ENCODE measurements at regions of chr3 and their contacts with region 1.

Region 1: DNA sequence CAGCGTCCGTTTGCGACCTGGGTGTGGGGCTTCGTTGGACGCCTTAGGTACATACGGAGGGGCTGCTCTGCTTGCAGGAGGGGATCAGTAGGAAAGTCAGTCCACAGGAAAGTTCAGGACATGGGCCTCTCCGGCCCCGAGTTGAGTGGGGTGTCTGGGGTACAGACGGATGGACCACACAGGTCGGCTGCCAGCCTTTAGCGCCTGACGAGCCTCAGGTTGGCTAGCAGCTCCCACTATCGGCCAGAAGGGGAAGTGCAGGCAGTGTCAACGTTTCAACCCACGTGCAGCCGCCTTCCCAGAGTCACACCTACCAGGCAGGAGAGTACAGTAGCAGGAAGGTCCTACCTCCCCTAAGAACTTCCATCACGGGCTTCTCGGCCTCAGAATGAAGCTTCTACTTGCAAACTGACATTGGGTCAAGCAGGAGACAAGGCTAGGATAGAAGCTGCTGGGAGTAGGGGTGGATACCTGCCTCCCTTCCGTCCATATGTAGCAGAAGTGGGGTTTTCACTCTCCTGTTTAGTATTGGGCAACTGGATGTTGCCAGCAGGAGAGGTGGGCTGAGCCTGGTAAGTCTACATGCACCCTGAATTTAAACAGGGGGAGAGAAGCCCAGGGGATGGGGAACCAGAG is 1.8 kb upstream of the SCN5A start:
- DNase-seq: peak; percentile 45
- ATAC-seq: peak; percentile 71
- H3K4me3 ChIP-seq: no peak overlapping the region
- H3K27ac ChIP-seq: no peak overlapping the region
- H3K4me1 ChIP-seq: peaks cover 13% of the 10 kb centered on the region
- H3K27me3 ChIP-seq: peaks cover 2 to 39% of the 10 kb centered on the region in 2 experiments
- CTCF ChIP-seq: peak; percentile 91
- EP300 ChIP-seq: no peak
- POLR2A ChIP-seq: no peak
- RAD21 ChIP-seq: peak; percentile 54; the same call in 1 of the 2 replicates

Region 2: DNA sequence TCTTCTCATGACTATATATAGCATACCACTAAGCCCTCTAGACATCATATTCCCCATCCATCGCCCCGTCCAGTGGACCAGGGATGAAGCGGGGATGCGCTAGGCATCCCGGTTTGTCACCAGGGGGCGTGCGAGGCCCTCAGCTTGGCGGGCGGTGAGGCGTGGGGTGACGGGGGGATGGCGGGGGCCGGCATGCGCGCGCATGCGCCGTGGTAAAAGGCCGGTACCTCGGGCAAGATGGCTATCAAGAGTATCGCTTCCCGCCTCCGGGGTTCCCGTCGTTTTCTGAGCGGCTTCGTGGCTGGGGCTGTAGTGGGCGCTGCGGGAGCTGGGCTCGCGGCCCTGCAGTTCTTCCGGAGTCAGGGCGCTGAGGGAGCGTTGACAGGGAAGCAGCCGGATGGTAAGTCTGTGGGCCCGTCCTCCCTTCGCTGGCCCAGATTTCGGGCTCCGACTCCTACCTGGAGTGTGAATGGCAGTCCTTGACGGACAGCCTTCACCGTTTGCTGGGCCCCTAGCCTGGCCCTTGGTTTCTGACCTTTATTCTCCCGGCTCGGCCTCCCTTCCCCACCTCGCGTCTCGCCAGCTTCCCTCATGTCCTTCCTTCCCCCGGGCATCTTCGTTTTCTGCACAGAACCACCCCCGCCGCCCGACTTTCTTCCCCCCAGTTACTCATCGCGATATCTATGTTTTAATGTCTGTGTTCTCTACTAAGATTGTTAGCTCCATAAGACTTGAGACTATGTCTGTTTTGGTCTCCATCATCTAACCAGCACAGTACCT is 155.0 kb before region 1 on chr3 and contains the start of gene EXOG:
- CTCF ChIA-PET with region 1: no interaction called
- POLR2A ChIA-PET with region 1: no interaction called
- in situ Hi-C with region 1: no loop called
- intact Hi-C with region 1: loop called (anchors 2 kb)
- DNase-seq: peak; percentile 84
- ATAC-seq: peak; percentile 98
- H3K4me3 ChIP-seq: peak within 1 kb of the TSS; percentile 80 to 85 (median 82)
- H3K27ac ChIP-seq: peak within 1 kb of the TSS; percentile 62
- H3K4me1 ChIP-seq: peaks cover 10% of the 10 kb centered on the region; the same call in 1 of the 2 replicates
- H3K27me3 ChIP-seq: no peaks in the 10 kb centered on the region
- CTCF ChIP-seq: peak; percentile 93
- EP300 ChIP-seq: no peak
- POLR2A ChIP-seq: peak in 1 of 2 experiments; percentile 74
- RAD21 ChIP-seq: peak; percentile 47; the same call in 1 of the 2 replicates
- total RNA-seq, gene EXOG: 7.2 and 9.5 TPM in 2 replicates

Region 3: DNA sequence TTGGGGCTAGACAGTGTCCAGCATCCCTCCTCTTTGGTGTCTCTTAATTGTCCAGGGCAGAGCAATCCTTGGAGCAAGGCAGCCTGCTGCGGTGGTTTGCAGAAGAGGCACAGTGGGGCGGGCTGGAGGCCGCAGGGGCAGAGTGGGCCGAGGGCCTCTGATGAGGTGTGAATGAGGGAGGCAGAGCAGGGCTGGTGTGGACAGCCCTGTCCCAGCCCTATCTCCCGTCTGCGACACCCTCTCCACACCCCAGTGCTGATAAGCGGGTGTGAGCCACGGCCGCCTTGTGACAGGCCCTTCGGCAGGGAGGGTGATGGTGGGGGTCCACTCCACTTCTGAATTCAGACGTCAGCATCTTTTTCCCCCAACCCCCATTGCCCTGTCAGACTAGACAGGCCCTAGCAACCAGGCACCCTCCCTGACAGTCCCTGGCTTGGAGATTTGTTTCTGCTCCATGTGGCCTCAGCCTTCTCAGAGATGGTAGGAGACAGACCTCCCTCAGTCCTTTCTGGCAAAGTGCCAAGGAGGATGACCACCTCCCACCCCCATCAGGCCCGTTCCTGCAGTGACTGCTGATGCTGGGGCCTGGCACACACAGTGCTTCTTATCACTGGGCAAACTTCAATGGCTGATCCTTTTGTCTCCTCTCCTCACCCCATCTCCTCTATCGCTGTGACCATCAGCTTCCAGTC is 117.8 kb before region 1 on chr3:
- CTCF ChIA-PET with region 1: no interaction called
- POLR2A ChIA-PET with region 1: no interaction called
- in situ Hi-C with region 1: loop called (anchors 5 kb)
- intact Hi-C with region 1: no loop called
- DNase-seq: no peak
- ATAC-seq: no peak; the same call in 1 of the 3 replicates
- H3K4me3 ChIP-seq: no peak overlapping the region
- H3K27ac ChIP-seq: no peak overlapping the region
- H3K4me1 ChIP-seq: no peaks in the 10 kb centered on the region
- H3K27me3 ChIP-seq: no peaks in the 10 kb centered on the region
- CTCF ChIP-seq: no peak
- EP300 ChIP-seq: no peak
- POLR2A ChIP-seq: no peak
- RAD21 ChIP-seq: no peak

Region 4: DNA sequence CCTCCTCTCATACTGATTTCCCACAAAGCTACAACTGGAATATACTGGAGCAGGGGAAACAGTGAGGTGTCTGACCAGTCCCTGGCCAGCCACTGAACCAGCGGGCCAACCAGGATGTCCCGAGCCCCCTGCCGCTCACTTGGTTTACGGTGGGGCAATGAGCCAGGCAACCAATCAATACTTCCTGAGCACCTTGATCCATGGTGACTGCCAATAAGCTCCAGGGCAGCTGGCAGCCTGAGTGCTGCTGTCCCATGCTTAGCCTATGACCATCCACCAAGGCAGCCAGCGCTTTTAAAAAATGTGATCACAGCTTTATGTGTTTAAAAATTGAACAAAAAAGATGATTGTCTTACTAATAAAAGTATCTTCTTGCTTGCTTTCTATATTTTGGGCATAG is 160.6 kb after region 1 on chr3:
- CTCF ChIA-PET with region 1: no interaction called
- POLR2A ChIA-PET with region 1: no interaction called
- in situ Hi-C with region 1: no loop called
- intact Hi-C with region 1: no loop called
- DNase-seq: no peak
- ATAC-seq: no peak
- H3K4me3 ChIP-seq: no peak overlapping the region
- H3K27ac ChIP-seq: no peak overlapping the region
- H3K4me1 ChIP-seq: no peaks in the 10 kb centered on the region
- H3K27me3 ChIP-seq: no peaks in the 10 kb centered on the region; a peak in 2 of 5 replicates
- CTCF ChIP-seq: no peak
- EP300 ChIP-seq: no peak
- POLR2A ChIP-seq: no peak
- RAD21 ChIP-seq: no peak

Region 5: GRCh38 chr3:38829404-38829803 is 178.1 kb after region 1 on chr3:
- CTCF ChIA-PET with region 1: no interaction called
- POLR2A ChIA-PET with region 1: no interaction called
- in situ Hi-C with region 1: no loop called
- intact Hi-C with region 1: loop called (anchors 5 kb)
- DNase-seq: peak; percentile 39
- ATAC-seq: peak; percentile 88
- H3K4me3 ChIP-seq: no peak overlapping the region
- H3K27ac ChIP-seq: no peak overlapping the region
- H3K4me1 ChIP-seq: peaks cover 5% of the 10 kb centered on the region; the same call in 1 of the 2 replicates
- H3K27me3 ChIP-seq: no peaks in the 10 kb centered on the region; a peak in 1 of 5 replicates
- CTCF ChIP-seq: no peak
- EP300 ChIP-seq: no peak
- POLR2A ChIP-seq: no peak
- RAD21 ChIP-seq: no peak

Region 6: GRCh38 chr3:39000008-39000450 is 348.8 kb after region 1 on chr3:
- CTCF ChIA-PET with region 1: interaction called, 4 read pairs
- POLR2A ChIA-PET with region 1: no interaction called
- in situ Hi-C with region 1: no loop called
- intact Hi-C with region 1: loop called (anchors 2 kb)
- DNase-seq: peak; percentile 60
- ATAC-seq: peak; percentile 82
- H3K4me3 ChIP-seq: no peak overlapping the region
- H3K27ac ChIP-seq: no peak overlapping the region
- H3K4me1 ChIP-seq: peaks cover under 1% of the 10 kb centered on the region; the same call in 1 of the 2 replicates
- H3K27me3 ChIP-seq: peaks cover 0 to 7% of the 10 kb centered on the region in 2 experiments; a peak in 2 of 5 replicates
- CTCF ChIP-seq: peak; percentile 88
- EP300 ChIP-seq: no peak
- POLR2A ChIP-seq: no peak
- RAD21 ChIP-seq: 0 out of 2 replicates have a peak, but pooled peaks have one; percentile 37

Measured in HepG2 (cell line).